H1 (cell line): ENCODE measurements at regions of chr15 and their contacts with region 1.

Region 1: DNA sequence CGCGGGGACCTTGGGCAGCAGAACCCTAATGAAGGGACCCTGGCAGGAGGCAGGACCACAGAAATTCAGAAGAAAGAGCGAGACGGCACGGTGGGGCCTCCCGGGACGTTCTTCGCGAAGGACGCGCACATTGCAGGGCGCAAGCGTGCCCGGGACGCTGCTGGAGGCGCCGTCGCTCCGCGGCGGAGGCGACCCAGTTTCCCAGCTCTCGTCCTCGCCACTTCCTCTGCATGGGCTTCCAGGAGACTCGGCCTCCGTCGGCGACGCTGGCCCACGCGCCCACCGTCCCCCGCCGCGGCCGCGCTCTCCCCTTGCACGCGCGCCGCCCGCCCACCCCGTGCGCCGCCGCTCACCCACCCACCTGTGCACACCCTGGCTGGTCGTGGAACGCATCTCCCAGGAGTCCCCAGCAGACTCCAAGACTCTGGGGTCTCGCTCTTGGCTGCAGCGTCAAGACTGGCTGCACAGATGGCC is 31.8 kb upstream of the SMAD3 start:
- DNase-seq: peak in 1 of 2 experiments; percentile 59
- H3K4me3 ChIP-seq: peak overlapping the region; percentile 1 to 50 (median 6); a peak in 6 of 8 replicates
- H3K27ac ChIP-seq: no peak overlapping the region
- H3K4me1 ChIP-seq: peaks cover 11 to 48% (median 25%) of the 10 kb centered on the region in 4 experiments
- H3K27me3 ChIP-seq: peaks cover 2 to 34% (median 25%) of the 10 kb centered on the region in 4 experiments
- CTCF ChIP-seq: 0 out of 4 replicates have a peak, but pooled peaks of 1 of the 3 experiments have one; percentile 1
- EP300 ChIP-seq: no peak
- POLR2A ChIP-seq: no peak
- RAD21 ChIP-seq: peak; percentile 17 to 25; a peak in 2 of 4 replicates

Region 2: GRCh38 chr15:67017311-67017710 is 16.3 kb before region 1 on chr15:
- CTCF ChIA-PET with region 1: interaction called, 3 read pairs
- POLR2A ChIA-PET with region 1: interaction called, 18 read pairs
- DNase-seq: no peak
- H3K4me3 ChIP-seq: no peak overlapping the region
- H3K27ac ChIP-seq: no peak overlapping the region
- H3K4me1 ChIP-seq: peaks cover 2 to 9% (median 6%) of the 10 kb centered on the region in 4 experiments
- H3K27me3 ChIP-seq: no peaks in the 10 kb centered on the region
- CTCF ChIP-seq: no peak
- EP300 ChIP-seq: no peak
- POLR2A ChIP-seq: no peak
- RAD21 ChIP-seq: no peak

Region 3: DNA sequence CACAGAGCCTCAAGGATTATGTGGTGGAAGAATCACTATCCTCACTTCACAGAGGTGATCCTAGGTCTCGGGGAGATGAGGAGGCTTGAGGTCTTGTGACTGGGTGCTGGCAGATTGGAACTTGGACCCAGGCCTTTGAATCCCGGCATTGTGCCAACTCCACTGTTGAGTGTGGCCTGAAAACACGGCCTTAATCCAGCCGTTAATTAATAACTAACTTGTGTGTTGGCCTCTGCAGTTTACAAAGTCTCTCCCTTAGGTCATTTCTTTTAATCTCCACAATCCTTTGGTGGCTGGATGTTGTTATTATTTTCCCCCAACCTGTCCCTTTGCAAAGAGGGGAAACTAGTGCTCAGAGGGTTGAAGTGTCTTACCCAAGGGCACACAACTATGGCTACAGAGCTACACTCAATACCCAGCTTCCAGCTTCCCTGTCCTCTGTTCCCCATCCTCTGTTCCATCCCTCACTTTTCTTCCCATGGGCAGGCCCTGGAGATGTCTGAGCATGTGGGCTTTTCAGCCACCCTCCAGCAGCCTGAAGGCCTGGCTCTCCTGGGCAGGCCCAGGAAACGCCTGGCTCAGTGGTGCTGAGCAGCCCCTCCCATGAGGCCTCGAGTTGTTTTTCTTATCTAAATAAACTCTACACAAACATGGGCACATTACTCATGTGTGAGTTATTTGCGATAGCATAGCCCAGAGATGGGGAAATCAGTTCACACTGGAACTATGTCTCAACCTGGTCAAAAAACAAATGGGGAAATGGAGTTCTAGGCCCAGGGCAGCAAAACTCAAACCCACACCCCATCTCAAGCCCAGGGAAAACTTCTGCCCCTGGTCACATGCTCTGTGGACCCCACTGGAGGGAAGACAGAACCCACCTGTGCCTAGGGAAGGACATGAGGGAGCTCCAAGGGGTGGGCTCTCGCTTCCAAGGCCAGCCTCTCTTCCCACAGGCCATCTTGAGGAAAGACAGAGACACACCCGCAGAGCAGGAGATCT is 15.0 kb after region 1 on chr15:
- CTCF ChIA-PET with region 1: interaction called, 7 read pairs
- POLR2A ChIA-PET with region 1: interaction called, 30 read pairs
- DNase-seq: no peak
- H3K4me3 ChIP-seq: no peak overlapping the region
- H3K27ac ChIP-seq: no peak overlapping the region
- H3K4me1 ChIP-seq: peaks cover 4% of the 10 kb centered on the region in 4 experiments; a peak in 5 of 7 replicates
- H3K27me3 ChIP-seq: no peaks in the 10 kb centered on the region
- CTCF ChIP-seq: no peak
- EP300 ChIP-seq: no peak
- POLR2A ChIP-seq: no peak
- RAD21 ChIP-seq: no peak

Region 4: GRCh38 chr15:67210555-67211168 is 177.1 kb after region 1 on chr15:
- CTCF ChIA-PET with region 1: no interaction called
- POLR2A ChIA-PET with region 1: no interaction called
- DNase-seq: no peak
- H3K4me3 ChIP-seq: no peak overlapping the region
- H3K27ac ChIP-seq: no peak overlapping the region
- H3K4me1 ChIP-seq: no peaks in the 10 kb centered on the region
- H3K27me3 ChIP-seq: no peaks in the 10 kb centered on the region
- CTCF ChIP-seq: no peak
- EP300 ChIP-seq: no peak
- POLR2A ChIP-seq: no peak
- RAD21 ChIP-seq: no peak